ENCODE measurements at regions of chr19 and their contacts with region 1.

Region 1: GRCh38 chr19:6674868-6675305 is 4.9 kb upstream of the TNFSF14 start:
- DNase-seq: peak; percentile 72
- H3K4me3 ChIP-seq: no peak overlapping the region
- H3K27ac ChIP-seq: no peak overlapping the region
- H3K4me1 ChIP-seq: peaks cover 20% of the 10 kb centered on the region
- H3K27me3 ChIP-seq: no peaks in the 10 kb centered on the region
- CTCF ChIP-seq: peak in 1 of 2 donors; percentile 4

Region 2: DNA sequence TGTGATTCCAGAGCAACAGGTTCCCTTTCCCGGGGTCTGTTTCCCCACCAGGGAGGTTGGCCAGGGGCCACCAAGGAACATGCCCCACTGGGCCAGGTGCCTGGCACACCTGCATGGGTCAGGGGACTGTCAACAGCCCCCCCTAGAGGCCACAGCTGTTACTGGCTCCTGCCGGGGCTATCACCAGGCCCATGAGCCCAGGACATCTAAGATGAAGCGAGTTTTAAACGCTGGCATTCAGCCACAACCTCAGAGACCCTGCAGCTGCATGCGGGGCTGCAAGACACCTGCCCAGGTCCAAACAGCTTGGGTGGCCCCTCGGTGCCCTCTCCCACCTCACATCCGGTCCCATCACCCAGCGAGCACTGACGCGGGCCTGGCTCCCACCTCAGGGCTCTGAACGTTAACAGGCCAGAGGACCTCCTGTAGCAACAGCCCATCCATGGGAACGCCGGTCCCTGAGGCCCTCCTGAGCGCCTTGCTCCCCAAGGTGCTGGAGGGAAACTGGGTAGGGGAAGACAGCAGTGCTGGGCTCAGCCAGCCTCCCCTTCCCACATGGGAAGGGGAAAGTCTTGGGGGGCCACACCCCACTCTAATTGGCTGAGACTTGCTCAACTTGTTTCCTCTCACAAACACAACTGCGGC is 262.3 kb before region 1 on chr19:
- CTCF ChIA-PET with region 1: no interaction called
- dilution Hi-C with region 1: loop called (anchors 5 kb)
- in situ Hi-C with region 1: no loop called
- intact Hi-C with region 1: no loop called
- DNase-seq: no peak
- H3K4me3 ChIP-seq: no peak overlapping the region
- H3K27ac ChIP-seq: no peak overlapping the region
- H3K4me1 ChIP-seq: no peaks in the 10 kb centered on the region
- H3K27me3 ChIP-seq: no peaks in the 10 kb centered on the region
- CTCF ChIP-seq: peak; percentile 60 to 63

Region 3: GRCh38 chr19:6489278-6490061 is 185.4 kb before region 1 on chr19:
- CTCF ChIA-PET with region 1: no interaction called
- dilution Hi-C with region 1: loop called (anchors 10 kb)
- in situ Hi-C with region 1: no loop called
- intact Hi-C with region 1: no loop called
- DNase-seq: no peak
- H3K4me3 ChIP-seq: no peak overlapping the region
- H3K27ac ChIP-seq: no peak overlapping the region
- H3K4me1 ChIP-seq: no peaks in the 10 kb centered on the region
- H3K27me3 ChIP-seq: no peaks in the 10 kb centered on the region
- CTCF ChIP-seq: no peak

Region 4: DNA sequence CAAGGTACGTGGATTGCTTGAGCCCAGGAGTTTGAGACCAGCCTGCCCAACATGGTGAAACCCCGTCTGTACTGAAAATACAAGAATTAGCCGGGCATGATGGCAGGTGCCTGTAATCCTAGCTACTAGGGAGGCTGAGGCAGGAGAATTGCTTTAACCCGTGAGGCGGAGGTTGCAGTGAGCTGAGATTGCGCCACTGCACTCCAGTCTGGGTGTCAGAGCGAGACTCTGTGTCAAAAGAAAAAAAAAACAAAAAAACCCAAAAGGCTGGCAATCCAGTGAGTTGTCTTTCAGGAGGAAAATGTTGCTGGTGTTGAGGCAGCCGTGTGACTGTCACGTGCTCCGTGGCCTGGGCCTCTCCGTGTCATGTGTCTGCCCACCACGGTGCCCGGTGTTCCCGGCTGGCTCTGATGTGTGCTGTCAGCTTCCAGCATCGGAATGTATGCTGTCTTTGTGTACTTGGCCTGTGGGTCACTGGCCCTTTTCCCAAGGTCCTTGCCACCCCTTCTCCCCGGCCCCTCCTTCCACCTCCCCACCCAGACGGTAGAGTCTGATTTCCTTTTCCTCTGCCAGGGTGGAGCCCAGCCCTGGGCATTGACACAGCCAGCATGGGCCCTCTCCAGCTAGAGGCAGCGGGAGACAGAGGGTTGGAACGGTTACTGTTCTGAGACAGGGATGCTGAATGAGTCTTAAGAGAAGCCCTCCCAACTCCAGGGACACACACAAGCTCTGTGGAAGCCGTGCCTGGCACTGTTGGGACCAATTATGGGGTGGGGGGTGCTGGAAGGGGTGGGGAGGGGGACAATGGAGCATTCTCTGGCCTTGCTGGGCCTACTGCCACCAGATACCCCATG is 165.5 kb before region 1 on chr19:
- CTCF ChIA-PET with region 1: no interaction called
- dilution Hi-C with region 1: no loop called
- in situ Hi-C with region 1: no loop called
- intact Hi-C with region 1: no loop called
- DNase-seq: no peak
- H3K4me3 ChIP-seq: no peak overlapping the region
- H3K27ac ChIP-seq: no peak overlapping the region
- H3K4me1 ChIP-seq: no peaks in the 10 kb centered on the region
- H3K27me3 ChIP-seq: no peaks in the 10 kb centered on the region
- CTCF ChIP-seq: no peak

Region 5: GRCh38 chr19:6593651-6594416 is 81.1 kb before region 1 on chr19:
- CTCF ChIA-PET with region 1: no interaction called
- dilution Hi-C with region 1: no loop called
- in situ Hi-C with region 1: no loop called
- intact Hi-C with region 1: no loop called
- DNase-seq: no peak
- H3K4me3 ChIP-seq: no peak overlapping the region
- H3K27ac ChIP-seq: no peak overlapping the region
- H3K4me1 ChIP-seq: peaks cover 19% of the 10 kb centered on the region
- H3K27me3 ChIP-seq: no peaks in the 10 kb centered on the region
- CTCF ChIP-seq: no peak

Region 6: DNA sequence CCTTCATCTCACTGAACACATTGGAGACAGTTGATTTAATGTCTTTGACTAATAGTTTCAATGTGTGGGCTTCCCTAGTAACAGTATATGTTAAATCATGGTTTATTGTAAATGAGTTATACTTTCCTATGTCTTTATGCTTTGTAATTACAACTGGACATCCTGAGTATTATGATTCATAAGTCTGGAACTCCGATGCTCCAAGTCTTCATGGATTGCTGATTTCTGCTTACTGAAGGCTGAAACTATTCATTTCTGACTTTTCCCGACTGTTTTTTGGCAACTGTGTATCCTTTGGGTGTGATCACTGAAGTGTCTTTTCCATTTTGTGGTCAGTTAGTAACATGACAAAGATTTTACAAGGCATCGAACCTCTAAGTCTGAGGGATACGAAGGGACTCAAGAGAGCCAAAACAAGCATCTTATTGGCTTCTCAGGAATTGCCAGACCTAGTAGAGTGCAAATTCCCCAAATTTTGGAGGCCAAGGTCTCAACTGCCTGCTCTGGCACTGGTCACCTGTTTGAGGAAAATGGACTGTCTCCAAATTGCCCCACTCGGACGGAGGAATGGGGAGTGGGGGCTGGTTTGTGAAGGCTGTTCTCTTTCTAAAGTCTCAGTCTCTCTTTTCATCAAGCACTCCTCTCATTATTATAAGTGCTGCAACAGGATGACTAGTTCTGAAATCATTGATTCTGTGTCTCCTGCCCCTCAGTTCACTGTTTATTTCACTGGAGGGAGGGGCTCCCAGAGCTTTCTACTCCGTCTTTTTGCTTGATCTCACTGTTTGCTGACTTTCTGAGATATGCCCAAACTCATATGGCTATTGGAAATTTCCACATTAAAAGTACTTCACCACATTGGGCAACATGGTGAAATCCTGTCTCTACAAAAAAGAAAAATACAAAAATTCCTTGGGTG is 63.7 kb before region 1 on chr19:
- CTCF ChIA-PET with region 1: no interaction called
- dilution Hi-C with region 1: loop called (anchors 5 kb)
- in situ Hi-C with region 1: no loop called
- intact Hi-C with region 1: no loop called
- DNase-seq: peak; percentile 90
- H3K4me3 ChIP-seq: peak overlapping the region in 2 of 3 experiments; percentile 0 to 12
- H3K27ac ChIP-seq: peak overlapping the region; percentile 85
- H3K4me1 ChIP-seq: peaks cover 22% of the 10 kb centered on the region
- H3K27me3 ChIP-seq: no peaks in the 10 kb centered on the region
- CTCF ChIP-seq: no peak

Region 7: GRCh38 chr19:6828698-6829562 is 154.0 kb after region 1 on chr19:
- CTCF ChIA-PET with region 1: no interaction called
- dilution Hi-C with region 1: loop called (anchors 5 kb)
- in situ Hi-C with region 1: no loop called
- intact Hi-C with region 1: no loop called
- DNase-seq: no peak
- H3K4me3 ChIP-seq: no peak overlapping the region
- H3K27ac ChIP-seq: no peak overlapping the region
- H3K4me1 ChIP-seq: no peaks in the 10 kb centered on the region
- H3K27me3 ChIP-seq: no peaks in the 10 kb centered on the region
- CTCF ChIP-seq: no peak

Region 8: DNA sequence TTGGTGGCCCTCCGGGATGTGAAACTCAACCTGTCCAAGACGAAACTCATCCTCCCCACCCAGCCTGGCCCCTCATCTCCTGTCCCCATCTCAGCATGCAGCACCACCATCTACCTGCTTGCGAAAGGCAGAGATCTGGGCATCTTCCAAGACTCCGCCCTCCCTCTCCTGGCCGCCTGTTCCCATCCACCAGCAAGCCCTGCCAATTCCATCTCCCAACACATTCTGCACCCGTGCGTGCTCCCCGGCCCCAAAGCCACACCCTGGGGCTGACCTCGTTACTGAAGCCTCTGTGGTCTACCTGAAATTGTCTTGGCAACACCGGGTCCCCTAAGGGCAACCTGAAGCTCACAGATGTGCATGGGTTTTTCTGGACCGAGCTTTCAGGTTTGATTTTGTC is 907.6 kb after region 1 on chr19:
- CTCF ChIA-PET with region 1: no interaction called
- dilution Hi-C with region 1: loop called (anchors 10 kb)
- in situ Hi-C with region 1: no loop called
- intact Hi-C with region 1: no loop called
- DNase-seq: no peak
- H3K4me3 ChIP-seq: no peak overlapping the region
- H3K27ac ChIP-seq: no peak overlapping the region
- H3K4me1 ChIP-seq: no peaks in the 10 kb centered on the region
- H3K27me3 ChIP-seq: peaks cover 2% of the 10 kb centered on the region
- CTCF ChIP-seq: no peak

Measured in mammary epithelial cell (primary cell).